ENCODE measurements at regions of chr9 and their contacts with region 1.

Region 1: GRCh38 chr9:22037954-22038690 is 29.0 kb upstream of the CDKN2B start:
- DNase-seq: no peak
- ATAC-seq: no peak
- H3K4me3 ChIP-seq: no peak overlapping the region
- H3K27ac ChIP-seq: no peak overlapping the region
- H3K4me1 ChIP-seq: peaks cover 6% of the 10 kb centered on the region; the same call in 1 of the 2 replicates
- H3K27me3 ChIP-seq: no peaks in the 10 kb centered on the region
- CTCF ChIP-seq: no peak
- EP300 ChIP-seq: no peak
- POLR2A ChIP-seq: no peak
- RAD21 ChIP-seq: no peak

Region 2: GRCh38 chr9:22119537-22120158 is 81.5 kb after region 1 on chr9:
- CTCF ChIA-PET with region 1: no interaction called
- POLR2A ChIA-PET with region 1: no interaction called
- in situ Hi-C with region 1: no loop called
- intact Hi-C with region 1: loop called (anchors 5 kb)
- DNase-seq: peak; percentile 21
- ATAC-seq: peak; percentile 74
- H3K4me3 ChIP-seq: no peak overlapping the region
- H3K27ac ChIP-seq: no peak overlapping the region
- H3K4me1 ChIP-seq: peaks cover 17% of the 10 kb centered on the region
- H3K27me3 ChIP-seq: no peaks in the 10 kb centered on the region
- CTCF ChIP-seq: peak; percentile 60
- EP300 ChIP-seq: no peak
- POLR2A ChIP-seq: no peak
- RAD21 ChIP-seq: no peak

Region 3: GRCh38 chr9:22238809-22239684 is 200.9 kb after region 1 on chr9:
- CTCF ChIA-PET with region 1: no interaction called
- POLR2A ChIA-PET with region 1: no interaction called
- in situ Hi-C with region 1: loop called (anchors 10 kb)
- intact Hi-C with region 1: loop called (anchors 1 kb)
- DNase-seq: peak; percentile 40
- ATAC-seq: peak; percentile 69
- H3K4me3 ChIP-seq: no peak overlapping the region
- H3K27ac ChIP-seq: no peak overlapping the region
- H3K4me1 ChIP-seq: 0 out of 2 replicates have a peak, but pooled peaks cover 8% of the 10 kb centered on the region
- H3K27me3 ChIP-seq: no peaks in the 10 kb centered on the region
- CTCF ChIP-seq: peak; percentile 32; the same call in 1 of the 2 replicates
- EP300 ChIP-seq: no peak
- POLR2A ChIP-seq: no peak
- RAD21 ChIP-seq: no peak

Measured in HepG2 (cell line).